ENCODE measurements at regions of chr10 and their contacts with region 1.

Region 1: DNA sequence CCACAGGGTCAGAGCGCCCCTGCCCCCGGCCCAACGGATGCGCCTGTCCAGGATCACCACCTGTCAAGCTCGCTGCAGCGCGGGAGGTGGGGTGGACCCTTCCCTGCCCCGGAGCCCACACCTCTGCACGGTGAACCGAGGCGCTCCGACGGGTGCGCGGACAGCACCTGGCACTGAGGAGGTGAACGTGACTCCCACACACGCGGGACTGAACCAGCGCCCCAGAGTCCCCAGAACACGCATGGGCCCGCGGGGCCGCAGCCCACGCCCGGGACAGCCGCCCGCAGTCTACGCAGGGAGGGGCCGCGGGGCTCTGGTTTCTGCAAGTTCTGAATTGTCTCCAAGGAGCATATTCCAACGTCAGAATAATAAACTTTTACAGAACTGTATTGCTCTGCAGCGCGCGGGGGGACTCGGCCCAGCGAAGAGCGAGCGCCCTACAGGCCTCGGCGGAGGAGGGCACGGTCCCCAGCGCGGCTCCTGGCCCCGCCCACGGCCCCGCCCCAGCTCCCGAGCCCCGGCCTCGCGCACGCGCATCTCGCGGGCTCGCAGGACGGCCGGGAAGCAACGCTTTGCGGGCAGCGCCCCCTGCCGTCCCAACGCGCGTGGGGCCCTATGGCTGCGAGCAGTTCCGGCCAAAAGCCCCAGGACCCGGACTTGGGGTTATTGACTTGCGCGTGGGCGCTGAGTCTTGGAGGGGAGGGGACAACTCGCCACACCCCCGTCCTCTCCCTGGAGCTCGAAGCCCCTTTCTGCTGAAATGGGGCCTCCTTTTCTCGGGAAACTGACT is 29.7 kb downstream of the OAT start:
- DNase-seq: peak; percentile 40
- ATAC-seq: peak; percentile 100
- H3K4me3 ChIP-seq: 0 out of 2 replicates have a peak overlapping the region, but pooled peaks have one; percentile 7
- H3K27ac ChIP-seq: no peak overlapping the region
- H3K4me1 ChIP-seq: no peaks in the 10 kb centered on the region
- H3K27me3 ChIP-seq: peaks cover 0 to 1% of the 10 kb centered on the region in 2 experiments; a peak in 2 of 4 replicates
- CTCF ChIP-seq: peak; percentile 90 to 97 (median 91); a peak in 5 of 6 replicates
- EP300 ChIP-seq: no peak
- POLR2A ChIP-seq: no peak
- RAD21 ChIP-seq: peak; percentile 97

Region 2: GRCh38 chr10:123582084-123582989 is 806.7 kb before region 1 on chr10:
- CTCF ChIA-PET with region 1: no interaction called
- POLR2A ChIA-PET with region 1: no interaction called
- RAD21 ChIA-PET with region 1: no interaction called
- SMC1A ChIA-PET with region 1: no interaction called
- in situ Hi-C with region 1: loop called (anchors 10 kb)
- intact Hi-C with region 1: no loop called
- DNase-seq: no peak
- ATAC-seq: peak; percentile 94
- H3K4me3 ChIP-seq: no peak overlapping the region
- H3K27ac ChIP-seq: no peak overlapping the region
- H3K4me1 ChIP-seq: no peaks in the 10 kb centered on the region
- H3K27me3 ChIP-seq: peaks cover 3 to 7% of the 10 kb centered on the region in 2 experiments; a peak in 2 of 4 replicates
- CTCF ChIP-seq: peak; percentile 83 to 95 (median 93)
- EP300 ChIP-seq: no peak
- POLR2A ChIP-seq: no peak
- RAD21 ChIP-seq: peak; percentile 98

Region 3: DNA sequence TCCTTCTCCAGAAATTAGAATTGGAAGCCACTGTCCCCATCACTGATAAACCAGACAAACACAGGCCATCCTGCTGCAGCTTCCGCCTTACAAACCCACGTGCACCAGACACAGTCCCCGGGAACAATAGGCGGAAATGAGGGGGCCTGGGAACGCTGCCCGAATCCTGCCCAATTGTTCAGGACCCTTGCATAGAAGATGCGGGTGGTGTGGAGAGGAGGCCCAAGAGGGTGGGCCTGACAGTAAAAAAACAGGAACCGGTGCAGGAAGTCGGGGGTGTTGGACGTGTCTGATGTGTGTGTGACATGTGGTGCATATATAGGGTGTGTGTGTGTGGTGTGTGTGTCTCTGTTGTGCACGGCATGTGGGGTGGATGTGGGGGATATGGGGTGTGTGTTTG is 269.1 kb before region 1 on chr10:
- CTCF ChIA-PET with region 1: no interaction called
- POLR2A ChIA-PET with region 1: no interaction called
- RAD21 ChIA-PET with region 1: no interaction called
- SMC1A ChIA-PET with region 1: no interaction called
- in situ Hi-C with region 1: no loop called
- intact Hi-C with region 1: loop called (anchors 5 kb)
- DNase-seq: no peak
- ATAC-seq: no peak
- H3K4me3 ChIP-seq: no peak overlapping the region
- H3K27ac ChIP-seq: no peak overlapping the region
- H3K4me1 ChIP-seq: peaks cover 13% of the 10 kb centered on the region
- H3K27me3 ChIP-seq: peaks cover 0 to 3% of the 10 kb centered on the region in 2 experiments; a peak in 2 of 4 replicates
- CTCF ChIP-seq: no peak
- EP300 ChIP-seq: no peak
- POLR2A ChIP-seq: no peak
- RAD21 ChIP-seq: no peak

Region 4: DNA sequence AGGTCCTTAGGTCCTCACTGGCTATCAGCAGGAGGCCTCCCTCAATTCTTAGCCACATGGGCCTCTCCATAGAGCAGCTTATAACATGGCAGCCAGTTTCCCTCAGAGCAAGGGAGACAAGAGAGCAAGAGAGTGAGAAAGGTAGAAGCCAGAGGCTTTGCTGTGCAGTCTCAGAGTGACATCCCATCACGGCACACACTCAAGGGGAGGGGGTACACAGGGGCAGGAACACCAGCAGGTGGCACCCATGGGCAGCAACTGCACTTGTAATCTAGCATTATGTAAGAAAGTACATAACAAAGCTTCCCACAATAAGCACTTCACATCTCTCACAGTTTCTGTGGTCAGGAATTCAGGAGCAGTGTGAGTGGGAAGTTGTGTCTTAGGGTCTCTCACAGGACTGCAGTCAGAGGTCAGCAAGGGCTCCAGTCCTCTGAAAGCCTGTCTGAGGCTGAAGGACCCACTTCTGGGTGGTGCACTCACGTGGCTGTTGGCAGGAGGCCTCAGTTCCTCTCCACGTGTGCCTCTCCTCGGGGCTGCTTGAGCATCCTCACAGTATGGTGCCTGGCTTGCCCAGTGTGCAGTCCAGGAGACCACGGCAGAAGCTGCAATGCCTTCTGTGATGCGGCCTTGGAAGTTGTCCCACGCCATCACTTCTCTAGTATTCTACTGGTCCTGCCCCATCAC is 129.7 kb before region 1 on chr10:
- CTCF ChIA-PET with region 1: interaction called, 13 read pairs
- POLR2A ChIA-PET with region 1: no interaction called
- RAD21 ChIA-PET with region 1: interaction called, 12 read pairs
- SMC1A ChIA-PET with region 1: interaction called, 4 read pairs
- in situ Hi-C with region 1: no loop called
- intact Hi-C with region 1: loop called (anchors 10 kb)
- DNase-seq: no peak
- ATAC-seq: peak; percentile 72
- H3K4me3 ChIP-seq: no peak overlapping the region
- H3K27ac ChIP-seq: no peak overlapping the region
- H3K4me1 ChIP-seq: no peaks in the 10 kb centered on the region
- H3K27me3 ChIP-seq: no peaks in the 10 kb centered on the region
- CTCF ChIP-seq: peak; percentile 16 to 35 (median 19); a peak in 3 of 6 replicates
- EP300 ChIP-seq: no peak
- POLR2A ChIP-seq: no peak
- RAD21 ChIP-seq: peak; percentile 33; the same call in 1 of the 2 replicates

Region 5: GRCh38 chr10:124403548-124403947 is 14.5 kb after region 1 on chr10:
- CTCF ChIA-PET with region 1: interaction called, 10 read pairs
- POLR2A ChIA-PET with region 1: interaction called, 5 read pairs
- RAD21 ChIA-PET with region 1: interaction called, 7 read pairs
- SMC1A ChIA-PET with region 1: interaction called, 8 read pairs
- in situ Hi-C with region 1: no loop called
- intact Hi-C with region 1: no loop called
- DNase-seq: peak; percentile 45
- ATAC-seq: peak; percentile 100
- H3K4me3 ChIP-seq: no peak overlapping the region
- H3K27ac ChIP-seq: no peak overlapping the region
- H3K4me1 ChIP-seq: no peaks in the 10 kb centered on the region
- H3K27me3 ChIP-seq: no peaks in the 10 kb centered on the region
- CTCF ChIP-seq: peak; percentile 56 to 76 (median 73)
- EP300 ChIP-seq: no peak
- POLR2A ChIP-seq: 0 out of 2 replicates have a peak, but pooled peaks have one; percentile 19
- RAD21 ChIP-seq: peak; percentile 72

Region 6: GRCh38 chr10:124565565-124566256 is 176.7 kb after region 1 on chr10:
- CTCF ChIA-PET with region 1: no interaction called
- POLR2A ChIA-PET with region 1: no interaction called
- RAD21 ChIA-PET with region 1: no interaction called
- SMC1A ChIA-PET with region 1: no interaction called
- in situ Hi-C with region 1: no loop called
- intact Hi-C with region 1: no loop called
- DNase-seq: no peak
- ATAC-seq: no peak; the same call in 1 of the 3 replicates
- H3K4me3 ChIP-seq: no peak overlapping the region
- H3K27ac ChIP-seq: no peak overlapping the region
- H3K4me1 ChIP-seq: no peaks in the 10 kb centered on the region
- H3K27me3 ChIP-seq: peaks cover 0 to 2% of the 10 kb centered on the region in 2 experiments; a peak in 1 of 4 replicates
- CTCF ChIP-seq: peak in 1 of 3 experiments; percentile 19; a peak in 1 of 6 replicates
- EP300 ChIP-seq: no peak
- POLR2A ChIP-seq: no peak
- RAD21 ChIP-seq: no peak